ENCODE measurements at regions of chr15 and their contacts with region 1.

Region 1: GRCh38 chr15:59688841-59689625 is at the start of gene BNIP2:
- DNase-seq: peak; percentile 99 to 100
- ATAC-seq: peak; percentile 87 to 97 (median 89)
- H3K4me3 ChIP-seq: peak within 1 kb of the TSS; percentile 93
- H3K4me3 Mint-ChIP-seq: peak within 1 kb of the TSS; percentile 94
- H3K27ac ChIP-seq: peak within 1 kb of the TSS; percentile 99
- H3K27ac Mint-ChIP-seq: peak within 1 kb of the TSS; percentile 91 to 98
- H3K4me1 ChIP-seq: peaks cover 22% of the 10 kb centered on the region
- H3K4me1 Mint-ChIP-seq: peaks cover 34 to 35% of the 10 kb centered on the region in 2 donors
- H3K27me3 ChIP-seq: no peaks in the 10 kb centered on the region
- H3K27me3 Mint-ChIP-seq: no peaks in the 10 kb centered on the region
- CTCF ChIP-seq: no peak
- total RNA-seq, gene BNIP2: 103 to 118 (median 105) TPM

Region 2: GRCh38 chr15:58933281-58934113 is 755.5 kb before region 1 on chr15 and contains the start of gene SLTM:
- intact Hi-C with region 1: loop called (anchors 5 kb)
- DNase-seq: peak; percentile 88 to 98
- ATAC-seq: peak; percentile 88 to 97 (median 91)
- H3K4me3 ChIP-seq: peak within 1 kb of the TSS; percentile 98
- H3K4me3 Mint-ChIP-seq: peak within 1 kb of the TSS; percentile 97
- H3K27ac ChIP-seq: peak within 1 kb of the TSS; percentile 100
- H3K27ac Mint-ChIP-seq: peak within 1 kb of the TSS; percentile 96 to 97
- H3K4me1 ChIP-seq: peaks cover 8% of the 10 kb centered on the region
- H3K4me1 Mint-ChIP-seq: peaks cover 26 to 27% of the 10 kb centered on the region in 2 donors
- H3K27me3 ChIP-seq: no peaks in the 10 kb centered on the region
- H3K27me3 Mint-ChIP-seq: peaks cover 0 to 3% of the 10 kb centered on the region in 2 donors
- CTCF ChIP-seq: peak; percentile 46
- total RNA-seq, gene SLTM: 206 to 226 (median 223) TPM

Region 3: GRCh38 chr15:59656897-59657634 is 32.0 kb before region 1 on chr15 and contains the start of gene GTF2A2:
- intact Hi-C with region 1: loop called (anchors 1 kb)
- DNase-seq: peak; percentile 94 to 95
- ATAC-seq: peak; percentile 98 to 100 (median 99)
- H3K4me3 ChIP-seq: peak within 1 kb of the TSS; percentile 92
- H3K4me3 Mint-ChIP-seq: no peak within 1 kb of the TSS
- H3K27ac ChIP-seq: peak within 1 kb of the TSS; percentile 89
- H3K27ac Mint-ChIP-seq: no peak within 1 kb of the TSS
- H3K4me1 ChIP-seq: peaks cover 6% of the 10 kb centered on the region
- H3K4me1 Mint-ChIP-seq: peaks cover 13 to 14% of the 10 kb centered on the region in 2 donors
- H3K27me3 ChIP-seq: no peaks in the 10 kb centered on the region
- H3K27me3 Mint-ChIP-seq: no peaks in the 10 kb centered on the region
- CTCF ChIP-seq: no peak
- total RNA-seq, gene GTF2A2: 34.7 to 57.4 (median 39.0) TPM

Region 4: DNA sequence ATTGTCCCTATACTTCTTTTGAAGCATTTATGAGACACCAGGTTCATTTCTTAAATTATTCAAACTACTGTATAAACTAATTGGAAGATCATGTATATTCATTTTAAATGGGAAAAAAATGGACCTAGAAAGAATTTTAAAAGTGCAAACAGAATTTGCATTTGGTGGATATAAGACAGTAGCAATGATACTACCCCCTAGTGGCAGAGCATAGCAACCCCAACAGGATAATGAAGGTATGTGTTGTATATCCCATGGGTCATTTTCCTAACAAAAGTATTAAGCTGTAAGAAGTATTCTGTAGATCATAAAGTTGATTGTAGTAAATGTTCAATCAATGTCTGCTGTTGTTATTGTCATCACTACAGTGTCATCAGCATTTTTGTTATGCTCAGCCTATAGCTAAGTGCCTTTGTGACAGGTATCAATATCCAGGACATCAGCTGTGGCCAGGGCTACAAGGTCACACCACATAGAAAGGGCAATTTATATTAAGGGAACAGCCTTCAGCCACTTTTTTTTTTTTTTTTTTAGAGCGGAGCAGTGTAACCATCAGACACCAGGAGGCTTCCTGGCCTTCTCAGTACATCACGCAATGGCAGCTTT is 490.9 kb after region 1 on chr15:
- intact Hi-C with region 1: loop called (anchors 2 kb)
- DNase-seq: peak in 1 of 2 donors; percentile 75
- ATAC-seq: peak; percentile 44 to 74 (median 64)
- H3K4me3 ChIP-seq: no peak overlapping the region
- H3K4me3 Mint-ChIP-seq: no peak overlapping the region
- H3K27ac ChIP-seq: no peak overlapping the region
- H3K27ac Mint-ChIP-seq: no peak overlapping the region
- H3K4me1 ChIP-seq: no peaks in the 10 kb centered on the region
- H3K4me1 Mint-ChIP-seq: no peaks in the 10 kb centered on the region
- H3K27me3 ChIP-seq: no peaks in the 10 kb centered on the region
- H3K27me3 Mint-ChIP-seq: peaks cover 21 to 56% of the 10 kb centered on the region in 2 donors
- CTCF ChIP-seq: peak; percentile 91

Measured in natural killer cell (primary cell).